Activated B cell treated with CpG ODN at 0.5 μM for 24 hours (primary cell): ENCODE measurements at regions of chr12 and their contacts with region 1.

Region 1: DNA sequence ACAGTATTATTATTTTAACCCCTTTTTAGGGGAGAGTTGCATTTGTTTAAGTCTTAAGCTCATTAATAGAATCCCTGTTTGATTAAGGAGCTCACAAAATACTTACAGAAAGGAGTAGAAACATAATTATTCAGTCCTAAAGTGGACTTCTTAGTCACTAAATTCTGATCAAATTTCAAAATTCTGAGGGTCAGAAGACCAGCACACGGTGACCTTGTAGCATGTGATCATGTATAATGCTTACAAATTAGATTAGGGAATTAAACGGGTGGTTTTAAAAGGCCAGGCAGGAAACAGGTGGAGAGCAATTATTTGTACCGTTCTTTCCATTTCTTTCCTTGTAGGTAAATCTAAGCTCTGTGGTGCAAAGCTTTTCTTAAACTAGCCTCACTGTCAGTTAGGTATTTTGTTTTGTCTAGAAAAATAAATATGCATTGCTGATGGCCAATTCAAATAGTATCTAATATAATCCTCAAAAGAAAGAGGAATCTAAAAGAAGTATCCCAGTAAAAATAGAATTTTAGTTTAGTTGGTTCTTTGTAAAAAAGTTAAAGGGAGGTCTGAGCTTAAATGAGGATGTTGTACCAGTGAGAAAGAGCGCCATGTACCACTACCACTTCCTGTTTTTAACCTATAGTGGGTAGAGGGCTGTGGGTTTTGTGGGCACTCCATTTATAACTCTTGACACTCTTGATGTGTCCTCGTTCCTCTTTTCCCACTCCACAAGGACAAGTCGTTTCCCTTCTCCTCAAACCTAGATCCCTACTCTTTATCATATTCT is 51.1 kb downstream of the SLC38A1 start:
- DNase-seq: no peak
- ATAC-seq: peak; percentile 63
- H3K4me3 Mint-ChIP-seq: peak overlapping the region; percentile 49
- H3K27ac Mint-ChIP-seq: peak overlapping the region; percentile 98
- H3K4me1 Mint-ChIP-seq: peaks cover 97% of the 10 kb centered on the region
- H3K27me3 Mint-ChIP-seq: no peaks in the 10 kb centered on the region
- CTCF ChIP-seq: no peak

Region 2: GRCh38 chr12:45762185-45763110 is 455.3 kb before region 1 on chr12:
- CTCF ChIA-PET with region 1: no interaction called
- POLR2A ChIA-PET with region 1: no interaction called
- intact Hi-C with region 1: no loop called
- DNase-seq: no peak
- ATAC-seq: no peak
- H3K4me3 Mint-ChIP-seq: no peak overlapping the region
- H3K27ac Mint-ChIP-seq: no peak overlapping the region
- H3K4me1 Mint-ChIP-seq: peaks cover 12% of the 10 kb centered on the region
- H3K27me3 Mint-ChIP-seq: no peaks in the 10 kb centered on the region
- CTCF ChIP-seq: no peak

Region 3: DNA sequence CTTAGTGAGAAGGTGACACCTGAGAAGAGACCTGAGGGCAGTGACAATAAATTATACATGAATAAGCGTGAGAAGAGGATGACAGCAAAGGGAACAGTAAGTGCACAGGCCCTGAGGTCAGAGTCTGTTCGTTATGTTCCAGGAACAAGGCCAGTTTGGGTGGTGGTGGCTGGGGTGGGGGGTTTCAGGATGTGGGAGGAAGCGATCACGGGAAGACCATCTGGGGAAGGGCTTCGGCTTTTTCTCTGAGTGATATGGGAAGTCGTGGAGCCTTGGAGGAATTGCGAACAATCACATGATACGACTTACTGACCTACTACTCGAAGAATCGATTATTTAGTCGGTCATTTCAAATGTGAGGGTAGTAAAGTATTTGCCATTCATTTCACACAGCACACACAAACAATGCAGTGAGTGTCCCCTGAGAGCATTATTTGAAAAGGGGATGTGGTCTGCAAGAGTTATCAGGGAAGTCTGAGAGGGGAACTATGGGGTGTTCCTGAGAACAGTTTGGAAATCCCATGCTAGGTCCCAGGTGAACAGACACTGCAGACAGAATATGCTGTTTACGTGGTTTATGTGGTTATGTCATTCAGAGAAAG is 43.6 kb before region 1 on chr12:
- CTCF ChIA-PET with region 1: no interaction called
- POLR2A ChIA-PET with region 1: interaction called, 21 read pairs
- intact Hi-C with region 1: loop called (anchors 1 kb)
- DNase-seq: no peak
- ATAC-seq: peak; percentile 69
- H3K4me3 Mint-ChIP-seq: peak overlapping the region; percentile 71
- H3K27ac Mint-ChIP-seq: peak overlapping the region; percentile 88
- H3K4me1 Mint-ChIP-seq: peaks cover 71% of the 10 kb centered on the region
- H3K27me3 Mint-ChIP-seq: no peaks in the 10 kb centered on the region
- CTCF ChIP-seq: no peak

Region 4: DNA sequence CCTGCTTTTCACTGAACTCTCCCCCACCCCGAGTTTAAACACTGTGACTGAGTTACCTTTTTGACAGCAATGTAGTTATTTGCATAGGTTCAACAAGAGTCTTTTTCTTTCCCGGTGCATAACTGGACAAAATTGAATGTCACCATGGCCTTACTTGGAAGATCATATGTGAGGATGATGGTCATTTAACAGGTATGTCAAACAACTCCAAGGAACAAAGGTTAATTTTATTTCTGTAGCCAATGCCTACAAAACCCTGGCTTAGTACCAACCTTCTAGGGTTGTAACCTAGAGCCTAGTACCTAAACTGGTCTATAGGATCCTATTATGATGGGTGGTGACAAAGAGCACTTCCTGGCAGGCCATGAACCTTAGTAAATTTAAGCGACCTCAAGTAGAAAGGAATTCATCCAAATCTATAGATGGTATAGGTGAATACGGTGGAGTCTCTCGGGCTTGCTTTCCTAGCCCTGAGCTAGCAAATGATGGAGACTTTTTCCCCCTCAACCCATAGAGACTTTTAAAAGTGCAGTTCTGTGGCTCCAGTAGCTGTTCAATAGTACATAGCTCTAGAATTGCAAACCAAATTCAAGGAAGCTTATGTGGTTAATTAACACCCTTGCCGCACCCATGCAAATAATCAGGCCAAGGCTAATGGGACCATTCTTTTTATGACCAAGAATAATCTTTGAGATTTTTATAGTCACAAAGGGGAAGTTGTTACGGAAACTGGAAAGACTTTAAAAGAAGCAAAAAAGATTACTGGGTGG is 37.9 kb before region 1 on chr12:
- CTCF ChIA-PET with region 1: no interaction called
- POLR2A ChIA-PET with region 1: interaction called, 21 read pairs
- intact Hi-C with region 1: loop called (anchors 1 kb)
- DNase-seq: no peak
- ATAC-seq: peak; percentile 60
- H3K4me3 Mint-ChIP-seq: peak overlapping the region; percentile 69
- H3K27ac Mint-ChIP-seq: peak overlapping the region; percentile 82
- H3K4me1 Mint-ChIP-seq: peaks cover 98% of the 10 kb centered on the region
- H3K27me3 Mint-ChIP-seq: no peaks in the 10 kb centered on the region
- CTCF ChIP-seq: no peak

Region 5: DNA sequence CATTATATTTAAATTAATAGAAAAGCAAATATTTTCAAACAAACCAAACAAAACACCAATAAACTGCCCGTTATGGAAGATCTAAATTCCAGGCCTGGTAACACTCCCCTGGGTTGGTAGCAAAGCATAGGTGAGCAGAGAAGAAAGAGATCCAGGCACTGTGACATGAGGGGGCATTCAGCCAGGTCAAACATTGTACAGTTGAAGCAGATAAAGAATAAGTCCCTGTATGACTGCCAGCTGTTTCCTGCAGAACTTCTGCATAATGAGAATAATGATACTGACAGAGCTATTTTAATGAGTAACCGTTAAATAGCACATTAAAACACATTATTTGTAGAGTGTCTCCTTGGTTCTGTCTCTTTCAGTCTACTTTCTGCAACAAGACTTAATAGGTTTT is 15.7 kb after region 1 on chr12:
- CTCF ChIA-PET with region 1: interaction called, 3 read pairs
- POLR2A ChIA-PET with region 1: interaction called, 4 read pairs
- intact Hi-C with region 1: loop called (anchors 2 kb)
- DNase-seq: no peak
- ATAC-seq: no peak
- H3K4me3 Mint-ChIP-seq: no peak overlapping the region
- H3K27ac Mint-ChIP-seq: peak overlapping the region; percentile 57
- H3K4me1 Mint-ChIP-seq: peaks cover 81% of the 10 kb centered on the region
- H3K27me3 Mint-ChIP-seq: no peaks in the 10 kb centered on the region
- CTCF ChIP-seq: no peak

Region 6: GRCh38 chr12:46342562-46343033 is 124.9 kb after region 1 on chr12:
- CTCF ChIA-PET with region 1: no interaction called
- POLR2A ChIA-PET with region 1: no interaction called
- intact Hi-C with region 1: no loop called
- DNase-seq: no peak
- ATAC-seq: peak; percentile 56
- H3K4me3 Mint-ChIP-seq: no peak overlapping the region
- H3K27ac Mint-ChIP-seq: no peak overlapping the region
- H3K4me1 Mint-ChIP-seq: peaks cover 2% of the 10 kb centered on the region
- H3K27me3 Mint-ChIP-seq: peaks cover 5% of the 10 kb centered on the region
- CTCF ChIP-seq: no peak

Region 7: GRCh38 chr12:46388427-46389021 is 170.8 kb after region 1 on chr12:
- CTCF ChIA-PET with region 1: no interaction called
- POLR2A ChIA-PET with region 1: interaction called, 4 read pairs
- intact Hi-C with region 1: loop called (anchors 2 kb)
- DNase-seq: no peak
- ATAC-seq: peak; percentile 66
- H3K4me3 Mint-ChIP-seq: peak overlapping the region; percentile 69
- H3K27ac Mint-ChIP-seq: peak overlapping the region; percentile 91
- H3K4me1 Mint-ChIP-seq: peaks cover 83% of the 10 kb centered on the region
- H3K27me3 Mint-ChIP-seq: no peaks in the 10 kb centered on the region
- CTCF ChIP-seq: no peak

Region 8: GRCh38 chr12:47356129-47356700 is 1138.5 kb after region 1 on chr12:
- CTCF ChIA-PET with region 1: no interaction called
- POLR2A ChIA-PET with region 1: no interaction called
- intact Hi-C with region 1: loop called (anchors 5 kb)
- DNase-seq: no peak
- ATAC-seq: peak; percentile 77
- H3K4me3 Mint-ChIP-seq: peak overlapping the region; percentile 51
- H3K27ac Mint-ChIP-seq: peak overlapping the region; percentile 97
- H3K4me1 Mint-ChIP-seq: peaks cover 85% of the 10 kb centered on the region
- H3K27me3 Mint-ChIP-seq: no peaks in the 10 kb centered on the region
- CTCF ChIP-seq: no peak